Aorta (tissue), 5 donors: ENCODE measurements at regions of chr7 and their contacts with region 1.

Region 1: DNA sequence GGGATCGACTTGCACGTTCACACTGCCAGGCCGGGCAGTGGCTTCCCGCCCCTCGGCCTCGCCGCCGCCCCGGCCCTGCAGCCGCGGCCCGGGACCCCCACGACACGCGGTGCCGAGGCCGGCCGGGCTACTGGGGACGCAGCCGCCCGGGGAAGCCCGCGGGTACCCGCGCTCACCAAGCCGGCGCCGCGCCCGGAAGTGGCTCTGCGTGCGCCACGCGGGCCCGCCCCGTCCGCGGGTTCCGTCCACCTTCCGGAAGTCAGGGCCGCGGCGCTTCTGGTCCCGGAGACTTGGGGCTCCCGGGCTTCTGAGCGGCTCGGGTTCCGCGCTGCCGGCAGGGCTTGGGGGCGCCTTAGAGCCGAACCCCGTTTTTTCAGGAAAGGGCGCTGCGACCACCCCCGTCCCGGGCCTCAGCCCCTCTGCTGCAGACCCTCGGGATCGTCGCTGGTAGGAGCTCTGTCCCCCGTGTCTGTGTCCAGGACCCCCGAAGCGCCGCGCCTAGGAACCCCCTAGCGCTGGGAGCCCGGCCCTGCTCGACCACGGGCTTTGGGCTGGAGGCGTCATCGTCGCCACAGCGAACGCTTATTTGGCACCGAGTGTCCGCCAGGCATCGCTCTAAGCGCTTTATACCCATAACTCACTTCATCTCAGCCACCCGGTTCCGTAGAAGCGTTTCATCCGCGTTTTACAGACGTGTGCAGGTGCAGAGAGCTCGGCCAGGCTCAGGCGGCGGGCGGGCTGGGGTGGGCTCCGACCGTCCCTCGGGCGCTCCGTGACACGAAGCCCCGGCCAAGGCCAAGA is at the start of gene PSMG3:
- DNase-seq: peak; percentile 95 to 97
- ATAC-seq: peak; percentile 97
- H3K4me3 ChIP-seq: peak within 1 kb of the TSS; percentile 78 to 88
- H3K27ac ChIP-seq: peak within 1 kb of the TSS in 1 of 2 donors; percentile 82
- H3K4me1 ChIP-seq: no peaks in the 10 kb centered on the region
- H3K27me3 ChIP-seq: no peaks in the 10 kb centered on the region
- total RNA-seq, gene PSMG3: 14.1 to 18.9 TPM

Region 2: GRCh38 chr7:1459522-1459892 is 110.5 kb before region 1 on chr7:
- intact Hi-C with region 1: no loop called
- DNase-seq: peak; percentile 100
- ATAC-seq: peak; percentile 96
- H3K4me3 ChIP-seq: peak overlapping the region in 1 of 2 donors; percentile 50
- H3K27ac ChIP-seq: no peak overlapping the region
- H3K4me1 ChIP-seq: no peaks in the 10 kb centered on the region
- H3K27me3 ChIP-seq: no peaks in the 10 kb centered on the region

Region 3: GRCh38 chr7:1493129-1493528 is 76.9 kb before region 1 on chr7:
- intact Hi-C with region 1: no loop called
- DNase-seq: no peak
- ATAC-seq: no peak
- H3K4me3 ChIP-seq: no peak overlapping the region
- H3K27ac ChIP-seq: no peak overlapping the region
- H3K4me1 ChIP-seq: no peaks in the 10 kb centered on the region
- H3K27me3 ChIP-seq: no peaks in the 10 kb centered on the region

Region 4: DNA sequence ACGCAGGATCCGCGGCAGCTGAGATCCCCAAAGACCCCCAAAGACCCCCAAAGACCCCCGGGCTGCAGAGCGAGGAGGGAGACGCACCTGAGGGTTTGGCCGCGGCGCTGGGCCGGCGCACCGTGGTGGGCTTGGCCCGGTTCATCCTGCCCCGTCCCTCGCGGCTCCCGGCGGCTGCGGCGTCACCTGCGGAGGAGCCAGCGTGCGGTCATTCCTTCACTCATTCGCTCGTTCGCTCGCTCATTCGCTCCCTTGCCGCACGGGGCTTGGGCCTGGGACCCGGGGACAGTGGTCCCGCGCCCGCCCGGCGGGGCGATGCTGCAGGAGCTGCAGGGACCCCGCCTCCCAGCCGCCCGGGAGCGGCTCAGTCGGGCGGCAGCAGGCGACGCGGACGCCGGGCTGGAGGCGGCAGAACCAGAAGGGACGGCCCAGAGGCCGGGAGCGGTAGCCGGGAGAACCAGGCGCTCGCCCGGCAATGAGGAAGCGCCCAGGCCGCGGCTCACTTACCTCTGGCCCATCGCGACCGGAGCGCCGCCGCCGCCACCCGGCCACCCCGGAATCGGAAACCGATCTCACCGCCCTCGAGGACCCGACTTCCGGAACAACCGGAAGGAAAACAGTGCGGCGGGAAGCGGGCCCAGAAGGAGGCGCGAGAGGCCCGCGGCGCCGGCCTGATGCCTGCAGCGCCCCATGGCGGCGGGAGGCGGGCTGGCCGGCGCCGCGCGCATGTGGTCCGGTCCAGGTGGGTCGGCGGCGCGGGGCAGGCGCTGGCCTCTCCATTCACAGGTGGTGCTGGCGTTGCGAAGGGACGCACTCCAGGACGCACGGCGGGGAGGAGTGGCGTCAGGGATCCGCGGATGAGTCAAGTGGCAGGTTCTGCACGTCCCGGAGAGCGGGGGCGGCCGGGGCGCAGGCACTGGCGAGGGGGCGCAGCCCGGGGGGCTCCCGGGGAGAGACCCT is 65.9 kb before region 1 on chr7 and contains the start of gene INTS1:
- intact Hi-C with region 1: loop called in 1 of 2 experiments (anchors 5 kb)
- DNase-seq: peak; percentile 95 to 97
- ATAC-seq: peak; percentile 94
- H3K4me3 ChIP-seq: peak within 1 kb of the TSS; percentile 71 to 97
- H3K27ac ChIP-seq: no peak within 1 kb of the TSS
- H3K4me1 ChIP-seq: no peaks in the 10 kb centered on the region
- H3K27me3 ChIP-seq: no peaks in the 10 kb centered on the region
- total RNA-seq, gene INTS1: 56.4 to 77.9 TPM

Region 5: DNA sequence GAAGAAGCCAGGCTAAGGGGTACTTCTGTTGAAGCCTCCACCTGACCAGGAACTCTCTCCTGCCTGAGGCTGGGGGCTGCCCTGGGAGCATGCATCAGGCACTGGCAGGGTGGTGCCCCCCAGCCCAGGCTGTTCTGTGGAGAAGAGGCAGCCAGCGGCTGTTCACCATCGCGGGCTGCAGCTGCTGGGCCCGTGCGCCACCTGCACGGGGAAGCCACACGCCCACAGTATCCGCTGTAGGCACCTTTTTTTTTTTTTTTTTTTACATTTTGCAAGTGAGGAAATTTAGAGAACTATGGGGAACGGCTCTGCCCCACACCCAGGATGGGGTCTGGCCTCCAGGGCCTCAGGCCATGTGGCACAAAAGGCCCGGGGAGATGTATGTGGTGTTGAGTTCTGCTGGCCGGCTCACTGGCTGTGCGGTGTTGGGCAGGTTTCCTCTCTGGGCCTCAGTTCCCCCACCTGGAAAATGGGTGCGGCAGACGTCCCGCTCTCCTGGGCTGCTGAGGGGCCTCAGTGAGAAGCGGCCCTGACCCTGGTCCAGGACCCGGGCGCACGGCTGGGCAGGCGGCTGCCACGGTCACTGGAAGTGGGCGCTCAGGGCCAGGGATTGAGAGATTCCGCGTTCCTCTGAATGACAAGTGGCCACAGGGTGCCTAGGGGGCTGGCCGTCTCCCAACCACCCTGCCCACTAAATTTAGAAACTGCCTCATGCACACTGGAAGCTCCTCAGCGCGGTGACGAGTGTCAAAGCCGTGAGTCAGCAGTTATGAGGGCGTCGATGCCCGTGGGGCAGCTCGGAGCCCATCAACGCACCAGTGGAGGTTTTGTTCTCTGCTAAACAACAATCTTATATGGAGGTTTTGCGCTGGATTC is 57.0 kb before region 1 on chr7:
- intact Hi-C with region 1: loop called in 1 of 2 experiments (anchors 5 kb)
- DNase-seq: peak; percentile 95
- ATAC-seq: peak; percentile 93
- H3K4me3 ChIP-seq: no peak overlapping the region
- H3K27ac ChIP-seq: peak overlapping the region; percentile 51 to 100
- H3K4me1 ChIP-seq: no peaks in the 10 kb centered on the region
- H3K27me3 ChIP-seq: no peaks in the 10 kb centered on the region

Region 6: DNA sequence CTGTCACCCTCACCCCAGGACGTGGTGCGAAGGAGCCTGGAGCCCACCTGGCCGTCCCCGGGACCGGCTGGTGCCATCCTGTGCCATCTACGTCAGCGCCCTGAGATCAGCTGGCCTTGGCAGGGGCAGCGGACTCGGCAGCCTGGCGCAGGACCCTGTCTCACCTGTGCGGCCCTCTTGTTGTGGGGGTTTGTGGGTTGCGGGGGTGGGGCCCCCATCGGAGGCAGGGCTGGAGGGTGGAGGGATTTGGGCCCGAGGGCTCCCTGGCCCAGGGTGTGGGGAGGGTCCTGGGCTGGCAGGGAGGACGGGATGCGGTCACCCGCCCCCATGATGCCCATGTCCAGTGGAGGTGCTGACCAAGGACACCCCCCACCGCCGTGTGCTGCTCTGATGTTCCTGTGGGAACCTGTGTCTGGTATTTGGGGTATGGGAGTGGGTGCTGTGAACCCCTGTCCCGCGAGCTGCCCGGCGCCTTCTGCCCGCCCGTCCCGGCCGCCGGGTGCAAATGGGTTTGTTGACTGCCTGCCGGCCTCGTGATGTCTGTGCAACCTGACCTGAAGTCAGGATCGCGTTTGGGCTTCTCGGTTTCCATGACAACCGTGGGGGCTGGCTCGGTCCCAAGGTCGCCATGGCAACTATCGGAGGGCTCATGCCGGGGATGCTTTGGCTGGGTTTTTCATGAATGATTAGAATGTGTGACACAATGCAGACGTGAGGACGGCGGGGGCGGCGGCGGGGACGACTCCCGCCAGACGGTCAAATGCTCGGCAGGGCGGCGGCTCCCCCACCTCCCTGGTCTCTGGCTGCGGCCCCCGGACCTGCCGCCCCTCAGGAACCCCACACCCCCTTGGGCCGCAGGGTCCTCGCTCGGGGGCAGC is 32.3 kb before region 1 on chr7:
- intact Hi-C with region 1: loop called in 1 of 2 experiments (anchors 2 kb)
- DNase-seq: peak; percentile 94 to 99
- ATAC-seq: peak; percentile 75
- H3K4me3 ChIP-seq: peak overlapping the region; percentile 34 to 36
- H3K27ac ChIP-seq: peak overlapping the region; percentile 88 to 98
- H3K4me1 ChIP-seq: no peaks in the 10 kb centered on the region
- H3K27me3 ChIP-seq: no peaks in the 10 kb centered on the region

Region 7: GRCh38 chr7:2241580-2242540 is 671.8 kb after region 1 on chr7 and contains the starts of genes MRM2 and NUDT1:
- intact Hi-C with region 1: loop called in 1 of 2 experiments (anchors 10 kb)
- DNase-seq: peak; percentile 86 to 94
- ATAC-seq: peak; percentile 93
- H3K4me3 ChIP-seq: peak within 1 kb of the TSS; percentile 91 to 96
- H3K27ac ChIP-seq: no peak within 1 kb of the TSS
- H3K4me1 ChIP-seq: peaks cover 0 to 4% of the 10 kb centered on the region in 2 donors
- H3K27me3 ChIP-seq: no peaks in the 10 kb centered on the region
- total RNA-seq, gene MRM2: 11.5 to 14.9 TPM
- total RNA-seq, gene NUDT1: 11.1 to 11.9 TPM

Region 8: GRCh38 chr7:2354186-2354938 is 784.3 kb after region 1 on chr7 and contains the start of gene EIF3B:
- intact Hi-C with region 1: loop called (anchors 5 to 10 kb)
- DNase-seq: peak; percentile 95
- ATAC-seq: peak; percentile 97
- H3K4me3 ChIP-seq: peak within 1 kb of the TSS; percentile 83 to 95
- H3K27ac ChIP-seq: peak within 1 kb of the TSS; percentile 84 to 91
- H3K4me1 ChIP-seq: no peaks in the 10 kb centered on the region
- H3K27me3 ChIP-seq: no peaks in the 10 kb centered on the region
- total RNA-seq, gene EIF3B: 84.7 to 95.2 TPM